Sciatic nerve (tissue), 2 donors: ENCODE measurements at regions of chr16 and their contacts with region 1.

Region 1: DNA sequence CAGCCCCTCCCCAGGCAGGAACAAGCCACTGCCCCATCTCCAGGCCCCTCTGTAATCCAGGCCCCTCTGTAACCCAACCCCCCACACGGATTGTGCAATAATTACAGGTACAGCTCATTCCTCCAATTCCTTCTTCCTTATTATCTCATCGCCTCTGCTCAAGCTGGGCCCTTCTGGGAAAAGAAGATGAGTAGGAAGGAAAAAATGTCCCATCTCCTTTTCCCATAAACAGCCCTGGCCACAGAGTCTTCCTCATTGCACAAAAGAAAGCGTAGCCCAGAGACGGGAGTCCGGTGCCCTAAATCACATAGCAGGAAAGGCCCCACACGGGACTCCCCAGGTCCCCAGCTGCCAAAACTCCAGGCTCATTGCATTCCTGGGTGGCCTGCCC is 3.6 kb upstream of the LITAFD start:
- DNase-seq: no peak
- ATAC-seq: peak; percentile 53

Region 2: DNA sequence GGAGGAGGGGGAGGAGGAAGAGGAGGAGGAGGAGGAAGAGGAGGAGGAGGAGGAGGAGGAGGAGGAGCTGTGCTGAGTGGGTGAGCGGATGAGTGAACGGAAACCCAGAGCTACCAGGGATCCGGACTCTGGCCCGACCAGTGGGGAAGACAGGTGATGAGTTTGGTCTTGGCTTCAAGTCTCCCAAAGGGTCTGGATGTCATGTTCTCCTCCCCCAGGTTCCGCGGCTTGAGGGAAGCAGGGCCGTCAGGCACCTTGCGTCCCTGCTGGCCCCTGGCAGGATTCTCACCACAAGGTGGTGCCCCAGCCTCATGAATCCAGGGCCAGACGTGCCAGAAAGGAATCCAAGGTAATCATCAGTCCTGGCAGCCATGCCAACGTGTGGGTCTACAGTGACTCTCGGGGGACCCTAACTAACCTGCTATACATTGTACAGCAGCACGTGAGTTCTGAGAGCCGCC is 217.6 kb before region 1 on chr16:
- intact Hi-C with region 1: loop called (anchors 5 kb)
- DNase-seq: peak; percentile 73
- ATAC-seq: peak; percentile 77

Region 3: GRCh38 chr16:8797364-8798173 is 80.9 kb before region 1 on chr16 and contains the starts of genes PMM2 and TMEM186:
- intact Hi-C with region 1: loop called (anchors 10 kb)
- DNase-seq: peak; percentile 96
- ATAC-seq: peak; percentile 99
- total RNA-seq, gene PMM2: 45.4 TPM
- total RNA-seq, gene TMEM186: 8.1 TPM

Region 4: DNA sequence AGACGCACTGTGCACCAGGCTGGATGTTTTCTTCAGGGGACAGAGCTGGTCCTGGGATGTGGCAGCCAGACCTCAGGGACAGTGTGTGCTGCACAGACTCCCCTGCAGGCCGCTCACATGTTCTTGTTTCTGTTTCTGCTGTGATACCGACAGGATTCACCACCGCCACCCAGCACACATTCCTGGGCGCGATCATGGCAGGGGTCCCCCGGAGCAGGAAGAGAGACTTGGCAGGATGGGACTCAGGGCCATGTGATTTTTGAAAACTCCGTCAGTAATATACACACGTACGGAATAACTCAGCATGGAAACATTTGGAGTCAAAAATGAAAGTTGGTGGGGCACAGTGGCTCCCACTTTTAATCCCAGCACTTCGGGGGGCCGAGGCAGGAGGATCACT is 292.0 kb after region 1 on chr16:
- intact Hi-C with region 1: no loop called
- DNase-seq: no peak
- ATAC-seq: no peak